ENCODE measurements at regions of chr3 and their contacts with region 1.

Region 1: GRCh38 chr3:8607234-8608040 is 37.2 kb downstream of the SSUH2 start:
- DNase-seq: peak; percentile 15
- ATAC-seq: no peak
- H3K4me3 Mint-ChIP-seq: no peak overlapping the region
- H3K27ac Mint-ChIP-seq: no peak overlapping the region
- H3K4me1 Mint-ChIP-seq: no peaks in the 10 kb centered on the region
- H3K27me3 Mint-ChIP-seq: peaks cover 5% of the 10 kb centered on the region

Region 2: GRCh38 chr3:8441969-8442559 is 165.4 kb before region 1 on chr3:
- CTCF ChIA-PET with region 1: interaction called, 3 read pairs
- POLR2A ChIA-PET with region 1: no interaction called
- intact Hi-C with region 1: loop called in 1 of 2 experiments (anchors 1 kb)
- DNase-seq: no peak
- ATAC-seq: no peak
- H3K4me3 Mint-ChIP-seq: no peak overlapping the region
- H3K27ac Mint-ChIP-seq: no peak overlapping the region
- H3K4me1 Mint-ChIP-seq: no peaks in the 10 kb centered on the region
- H3K27me3 Mint-ChIP-seq: peaks cover 7% of the 10 kb centered on the region

Region 3: GRCh38 chr3:8509961-8510360 is 97.5 kb before region 1 on chr3:
- CTCF ChIA-PET with region 1: no interaction called
- POLR2A ChIA-PET with region 1: no interaction called
- intact Hi-C with region 1: no loop called
- DNase-seq: no peak
- ATAC-seq: no peak
- H3K4me3 Mint-ChIP-seq: no peak overlapping the region
- H3K27ac Mint-ChIP-seq: no peak overlapping the region
- H3K4me1 Mint-ChIP-seq: no peaks in the 10 kb centered on the region
- H3K27me3 Mint-ChIP-seq: peaks cover 1% of the 10 kb centered on the region

Region 4: DNA sequence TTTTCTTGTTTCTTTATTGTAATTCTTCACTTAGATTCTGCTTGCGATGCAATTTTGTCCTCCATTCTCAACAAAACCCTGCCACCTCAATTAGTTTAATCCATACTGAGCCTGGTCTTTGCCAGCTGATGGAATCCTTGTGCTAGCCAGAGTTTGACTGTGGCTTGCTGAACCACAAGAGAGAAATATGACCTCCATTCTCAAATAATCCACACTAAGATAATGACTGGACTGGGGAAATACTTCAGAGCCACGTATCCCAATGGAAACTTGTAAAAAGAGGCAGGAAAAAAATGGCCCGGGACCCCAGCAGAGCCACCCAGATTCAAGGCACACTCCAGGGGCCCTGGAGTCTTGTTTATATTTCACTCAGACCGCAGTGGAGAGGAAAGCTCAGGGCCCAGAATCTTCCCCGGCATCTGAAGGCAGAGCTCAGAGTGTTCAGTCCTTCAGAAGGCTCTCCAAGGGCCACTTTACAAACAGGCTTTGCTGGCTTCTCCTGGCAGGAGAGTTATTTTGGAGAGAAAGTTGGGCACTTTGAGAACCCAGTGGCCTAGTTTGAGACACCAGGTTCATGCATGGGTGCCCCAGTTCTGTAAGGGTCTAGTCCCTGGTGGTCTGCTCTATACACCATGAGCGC is 25.5 kb before region 1 on chr3:
- CTCF ChIA-PET with region 1: no interaction called
- POLR2A ChIA-PET with region 1: no interaction called
- intact Hi-C with region 1: no loop called
- DNase-seq: no peak
- ATAC-seq: no peak
- H3K4me3 Mint-ChIP-seq: no peak overlapping the region
- H3K27ac Mint-ChIP-seq: no peak overlapping the region
- H3K4me1 Mint-ChIP-seq: no peaks in the 10 kb centered on the region
- H3K27me3 Mint-ChIP-seq: peaks cover 2% of the 10 kb centered on the region

Measured in activated CD4-positive, alpha-beta T cell treated with anti-CD3 and anti-CD28 coated beads for 36 hours (primary cell).